Posterior cingulate gyrus (tissue), 11 donors: ENCODE measurements at regions of chr1 and their contacts with region 1.

Region 1: DNA sequence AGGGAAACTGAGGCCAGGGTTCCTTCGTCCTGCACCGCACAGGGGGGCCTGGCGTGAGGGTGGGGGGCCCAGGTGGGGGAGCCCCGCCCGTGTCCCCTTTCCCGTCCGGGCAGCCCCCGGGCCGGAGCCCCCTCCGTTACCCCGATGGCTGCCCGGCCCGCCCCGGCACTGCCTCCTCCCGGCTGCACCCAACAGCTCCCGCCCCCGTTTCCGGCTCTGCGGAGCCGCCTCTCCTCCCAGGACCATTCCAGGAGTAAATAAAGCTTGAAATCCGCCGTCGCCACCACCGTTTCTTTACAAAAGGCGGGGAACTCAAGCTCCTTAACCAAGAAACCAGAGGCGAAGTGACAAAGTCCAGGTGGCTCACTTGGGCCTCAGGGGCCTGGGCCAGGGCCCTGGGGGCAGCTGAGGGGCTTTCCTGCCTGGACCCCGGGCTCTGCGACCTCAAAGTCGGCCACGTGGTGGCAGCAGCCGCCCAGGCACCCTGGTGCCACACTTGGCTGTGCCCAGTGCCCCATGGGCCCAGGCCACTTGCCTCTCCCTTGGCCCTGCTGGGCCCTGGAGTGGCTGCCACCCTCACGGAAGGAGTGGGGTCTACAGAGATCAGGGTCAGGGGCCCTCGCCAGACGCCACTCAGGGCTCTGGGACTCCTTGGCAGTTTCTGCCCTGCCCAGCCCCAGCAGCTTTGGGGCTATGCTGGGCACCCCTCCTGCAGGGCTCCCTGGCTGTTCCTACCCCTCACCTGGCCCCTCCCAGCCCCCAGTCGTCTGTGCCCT is 514 bp upstream of the FAAP20 start:
- DNase-seq: peak; percentile 72 to 98 (median 82)

Region 2: GRCh38 chr1:2381741-2382620 is 186.9 kb after region 1 on chr1:
- intact Hi-C with region 1: loop called (anchors 1 kb)
- DNase-seq: peak; percentile 58 to 97 (median 78)